ENCODE measurements at regions of chr19 and their contacts with region 1.

Region 1: GRCh38 chr19:44723952-44724319 is 24.6 kb upstream of the BCL3 start:
- DNase-seq: peak; percentile 85
- CTCF ChIP-seq: peak; percentile 96

Region 2: GRCh38 chr19:44592441-44592890 is 131.5 kb before region 1 on chr19:
- CTCF ChIA-PET with region 1: no interaction called
- POLR2A ChIA-PET with region 1: no interaction called
- DNase-seq: no peak
- CTCF ChIP-seq: no peak

Region 3: DNA sequence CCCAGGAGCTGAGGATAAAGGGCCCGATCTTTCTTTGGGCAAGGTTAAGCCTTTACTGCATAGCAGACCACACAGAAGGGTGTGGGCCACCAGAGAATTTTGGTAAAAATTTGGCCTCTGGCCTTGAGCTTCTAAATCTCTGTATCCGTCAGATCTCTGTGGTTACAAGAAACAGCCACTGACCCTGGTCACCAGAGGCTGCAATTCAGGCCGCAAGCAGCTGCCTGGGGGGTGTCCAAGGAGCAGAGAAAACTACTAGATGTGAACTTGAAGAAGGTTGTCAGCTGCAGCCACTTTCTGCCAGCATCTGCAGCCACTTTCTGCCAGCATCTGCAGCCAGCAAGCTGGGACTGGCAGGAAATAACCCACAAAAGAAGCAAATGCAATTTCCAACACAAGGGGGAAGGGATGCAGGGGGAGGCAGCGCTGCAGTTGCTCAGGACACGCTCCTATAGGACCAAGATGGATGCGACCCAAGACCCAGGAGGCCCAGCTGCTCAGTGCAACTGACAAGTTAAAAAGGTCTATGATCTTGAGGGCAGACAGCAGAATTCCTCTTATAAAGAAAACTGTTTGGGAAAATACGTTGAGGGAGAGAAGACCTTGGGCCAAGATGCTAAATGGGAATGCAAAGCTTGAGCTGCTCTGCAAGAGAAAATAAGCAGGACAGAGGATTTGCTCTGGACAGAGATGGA is 61.1 kb before region 1 on chr19:
- CTCF ChIA-PET with region 1: interaction called, 27 read pairs
- POLR2A ChIA-PET with region 1: no interaction called
- DNase-seq: no peak
- CTCF ChIP-seq: no peak

Region 4: DNA sequence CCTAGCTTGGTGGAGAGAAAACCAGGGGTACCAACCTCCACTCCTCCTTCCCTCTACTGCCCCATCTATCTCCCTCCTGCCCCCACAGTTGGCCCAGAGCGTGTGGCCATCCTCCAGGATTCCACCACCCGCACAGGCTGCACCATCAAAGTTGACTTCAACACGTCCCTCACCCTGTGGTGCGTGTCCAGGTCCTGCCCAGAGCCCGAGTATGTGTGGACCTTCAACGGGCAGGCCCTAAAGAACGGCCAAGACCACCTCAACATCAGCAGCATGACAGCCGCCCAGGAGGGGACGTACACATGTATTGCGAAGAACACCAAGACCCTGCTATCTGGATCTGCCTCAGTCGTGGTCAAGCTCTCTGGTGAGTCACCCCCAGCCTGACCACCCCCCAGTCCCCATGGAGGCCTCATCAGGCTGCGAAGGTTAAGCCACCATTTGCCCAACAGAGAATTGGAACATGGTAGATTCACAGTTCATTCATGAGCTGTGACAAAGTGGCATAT is 18.4 kb before region 1 on chr19:
- CTCF ChIA-PET with region 1: interaction called, 26 read pairs
- POLR2A ChIA-PET with region 1: no interaction called
- DNase-seq: no peak
- CTCF ChIP-seq: no peak

Region 5: GRCh38 chr19:44741841-44742352 is 18.0 kb after region 1 on chr19:
- CTCF ChIA-PET with region 1: interaction called, 93 read pairs
- POLR2A ChIA-PET with region 1: no interaction called
- DNase-seq: no peak
- CTCF ChIP-seq: no peak

Region 6: DNA sequence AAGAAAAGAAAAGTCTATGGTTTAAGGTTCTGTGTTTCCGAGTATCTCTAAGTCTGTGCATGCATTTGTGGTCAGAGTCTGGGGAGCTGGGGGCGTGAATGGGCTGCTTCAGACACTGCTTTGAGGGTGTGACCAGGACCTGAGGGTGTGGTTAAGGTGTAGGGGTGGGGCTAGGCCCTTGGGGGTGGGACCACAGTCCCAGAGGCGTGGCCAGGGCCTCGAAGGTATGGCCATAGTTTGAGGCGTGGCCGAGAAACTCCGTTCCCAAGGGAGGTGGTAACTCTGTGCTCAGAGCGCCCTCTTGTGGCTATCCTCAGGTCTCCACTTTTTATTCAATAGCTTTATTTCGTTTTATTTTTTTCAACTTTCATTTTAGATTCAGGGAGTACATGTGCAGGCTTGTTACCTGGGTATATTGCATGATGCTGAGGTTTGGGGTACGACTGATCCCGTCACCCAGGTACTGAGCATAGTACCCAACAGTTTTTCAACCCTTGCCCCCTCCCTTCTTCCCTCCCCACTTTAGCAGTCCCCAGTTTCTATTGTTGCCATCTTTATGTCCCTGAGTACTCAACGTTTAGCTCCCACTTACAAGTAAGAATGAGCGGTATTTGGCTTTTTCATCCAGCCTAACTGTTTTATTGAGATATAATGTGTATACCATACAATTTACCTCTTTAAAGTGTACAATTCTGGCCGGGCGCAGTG is 46.8 kb after region 1 on chr19:
- CTCF ChIA-PET with region 1: interaction called, 513 read pairs
- POLR2A ChIA-PET with region 1: interaction called, 4 read pairs
- DNase-seq: peak; percentile 99
- CTCF ChIP-seq: peak; percentile 78

Region 7: GRCh38 chr19:44792281-44792680 is 68.3 kb after region 1 on chr19:
- CTCF ChIA-PET with region 1: interaction called, 10 read pairs
- POLR2A ChIA-PET with region 1: no interaction called
- DNase-seq: peak; percentile 32
- CTCF ChIP-seq: no peak

Measured in GM10248 (cell line).